ENCODE measurements at regions of chr1 and their contacts with region 1.

Region 1: GRCh38 chr1:8348777-8349491 is 31.0 kb downstream of the SLC45A1 start:
- DNase-seq: peak; percentile 80
- ATAC-seq: peak; percentile 80
- H3K4me3 ChIP-seq: no peak overlapping the region
- H3K27ac ChIP-seq: no peak overlapping the region
- H3K4me1 ChIP-seq: peaks cover 9% of the 10 kb centered on the region
- H3K27me3 ChIP-seq: no peaks in the 10 kb centered on the region
- CTCF ChIP-seq: peak; percentile 82

Region 2: GRCh38 chr1:7983086-7983778 is 365.7 kb before region 1 on chr1:
- intact Hi-C with region 1: loop called (anchors 5 kb)
- DNase-seq: no peak
- ATAC-seq: no peak
- H3K4me3 ChIP-seq: no peak overlapping the region
- H3K27ac ChIP-seq: no peak overlapping the region
- H3K4me1 ChIP-seq: peaks cover 9% of the 10 kb centered on the region
- H3K27me3 ChIP-seq: no peaks in the 10 kb centered on the region
- CTCF ChIP-seq: no peak

Region 3: DNA sequence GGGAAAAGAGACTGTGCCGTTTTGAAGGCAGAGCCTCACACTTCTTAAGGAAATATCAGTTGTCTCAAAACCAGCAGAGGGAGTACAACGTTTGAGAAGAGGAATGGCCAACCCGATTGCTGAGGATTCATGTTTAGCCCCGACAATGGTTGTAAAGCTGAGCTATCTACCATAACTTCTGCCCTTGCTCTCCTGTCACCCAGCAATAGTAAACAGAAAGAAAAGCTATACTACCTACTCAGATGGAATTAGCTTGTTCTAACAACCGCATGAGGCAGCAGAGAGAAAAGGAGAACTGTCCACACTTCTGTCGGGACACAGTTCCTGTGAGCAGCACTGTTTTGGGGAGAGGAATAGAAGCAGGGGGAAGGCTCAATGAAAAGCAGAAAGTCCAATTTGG is 60.2 kb after region 1 on chr1:
- intact Hi-C with region 1: loop called (anchors 10 kb)
- DNase-seq: no peak
- ATAC-seq: peak; percentile 79
- H3K4me3 ChIP-seq: no peak overlapping the region
- H3K27ac ChIP-seq: peak overlapping the region; percentile 82
- H3K4me1 ChIP-seq: peaks cover 70% of the 10 kb centered on the region
- H3K27me3 ChIP-seq: no peaks in the 10 kb centered on the region
- CTCF ChIP-seq: peak; percentile 48